ENCODE measurements at regions of chr1 and their contacts with region 1.

Region 1: GRCh38 chr1:60731321-60731720 is 351.0 kb upstream of the NFIA start:
- DNase-seq: no peak
- H3K4me3 ChIP-seq: no peak overlapping the region
- H3K27ac ChIP-seq: no peak overlapping the region
- H3K4me1 ChIP-seq: no peaks in the 10 kb centered on the region
- H3K27me3 ChIP-seq: no peaks in the 10 kb centered on the region
- CTCF ChIP-seq: no peak

Region 2: DNA sequence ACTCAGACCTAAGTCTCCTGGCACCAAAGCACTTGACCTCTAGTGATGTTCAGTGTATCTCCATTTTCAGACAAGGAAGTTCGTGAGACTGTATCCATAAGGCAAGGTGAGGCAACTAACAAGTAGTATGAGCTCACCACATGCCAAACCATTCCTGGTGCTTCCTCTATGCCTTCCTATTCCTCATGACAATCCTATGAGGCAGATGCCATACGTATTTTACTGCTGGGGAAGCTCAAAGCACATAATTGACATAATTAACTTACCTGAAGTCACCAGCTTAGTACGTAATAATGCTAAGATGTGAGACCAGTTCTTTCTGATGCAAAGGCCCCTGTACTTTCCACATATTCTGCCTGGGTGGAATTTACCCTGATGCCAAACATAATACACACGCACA is 267.4 kb after region 1 on chr1:
- intact Hi-C with region 1: loop called (anchors 5 kb)
- DNase-seq: no peak
- H3K4me3 ChIP-seq: no peak overlapping the region
- H3K27ac ChIP-seq: peak overlapping the region in 1 of 2 donors; percentile 5
- H3K4me1 ChIP-seq: peaks cover 0 to 19% (median 0%) of the 10 kb centered on the region in 4 donors
- H3K27me3 ChIP-seq: no peaks in the 10 kb centered on the region
- CTCF ChIP-seq: no peak

Measured in tibial artery (tissue), 4 donors.